ENCODE measurements at regions of chr19 and their contacts with region 1.

Region 1: GRCh38 chr19:13195678-13196077 is 45.5 kb downstream of the IER2 start:
- DNase-seq: peak; percentile 78
- H3K4me3 Mint-ChIP-seq: no peak overlapping the region
- H3K27ac Mint-ChIP-seq: peak overlapping the region; percentile 49
- H3K4me1 Mint-ChIP-seq: peaks cover 26% of the 10 kb centered on the region
- H3K27me3 Mint-ChIP-seq: no peaks in the 10 kb centered on the region

Region 2: GRCh38 chr19:13155472-13156359 is 40.0 kb before region 1 on chr19:
- CTCF ChIA-PET with region 1: interaction called, 19 read pairs
- POLR2A ChIA-PET with region 1: interaction called, 7 read pairs
- intact Hi-C with region 1: loop called (anchors 2 kb)
- DNase-seq: peak; percentile 84
- H3K4me3 Mint-ChIP-seq: peak overlapping the region; percentile 99
- H3K27ac Mint-ChIP-seq: peak overlapping the region; percentile 97
- H3K4me1 Mint-ChIP-seq: peaks cover 41% of the 10 kb centered on the region
- H3K27me3 Mint-ChIP-seq: peaks cover 3% of the 10 kb centered on the region

Region 3: DNA sequence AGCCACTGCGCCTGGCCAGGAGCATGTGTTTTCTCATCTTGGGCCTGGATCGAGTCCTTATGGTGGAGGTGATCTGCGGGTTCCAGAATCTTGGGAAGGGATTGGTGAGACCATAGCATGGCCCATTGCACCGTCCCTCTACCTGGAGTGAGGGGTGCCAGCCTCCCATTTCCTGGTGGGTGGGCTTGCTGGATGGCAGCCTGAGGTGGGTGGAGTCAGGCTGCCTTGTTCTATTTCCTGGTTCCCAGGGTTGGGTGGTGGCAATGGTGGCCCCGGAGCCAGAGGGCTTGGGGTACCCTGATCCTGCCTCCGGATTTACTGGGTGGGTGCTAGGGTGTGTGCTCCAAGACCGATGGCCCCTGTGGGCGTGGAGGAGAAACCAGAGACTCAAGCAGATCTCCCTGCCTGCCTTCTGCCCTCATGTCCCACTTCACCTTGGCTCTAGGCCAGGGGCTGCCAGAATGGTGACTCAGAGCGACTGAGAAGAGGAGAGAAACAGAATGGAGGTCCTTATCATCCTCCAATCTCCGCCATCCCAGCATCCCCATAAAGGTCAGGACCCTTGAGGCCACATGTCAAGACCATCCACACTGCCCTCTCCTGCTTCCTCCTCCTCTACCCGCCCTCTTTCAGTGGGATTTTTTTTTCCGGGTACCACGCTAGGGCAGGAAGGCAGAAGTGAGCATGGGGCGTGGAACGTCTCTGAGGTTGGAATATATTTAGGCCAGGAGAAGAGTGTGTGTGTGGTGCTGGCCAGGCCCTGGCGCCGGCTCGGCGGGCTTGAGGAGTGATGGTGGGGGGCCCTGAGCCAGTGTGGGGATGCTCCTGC is 23.4 kb before region 1 on chr19:
- CTCF ChIA-PET with region 1: interaction called, 13 read pairs
- POLR2A ChIA-PET with region 1: no interaction called
- intact Hi-C with region 1: no loop called
- DNase-seq: peak; percentile 90
- H3K4me3 Mint-ChIP-seq: peak overlapping the region; percentile 83
- H3K27ac Mint-ChIP-seq: peak overlapping the region; percentile 99
- H3K4me1 Mint-ChIP-seq: peaks cover 55% of the 10 kb centered on the region
- H3K27me3 Mint-ChIP-seq: no peaks in the 10 kb centered on the region

Region 4: GRCh38 chr19:13212759-13213330 is 17.2 kb after region 1 on chr19:
- CTCF ChIA-PET with region 1: interaction called, 22 read pairs
- POLR2A ChIA-PET with region 1: no interaction called
- intact Hi-C with region 1: loop called (anchors 2 kb)
- DNase-seq: peak; percentile 85
- H3K4me3 Mint-ChIP-seq: no peak overlapping the region
- H3K27ac Mint-ChIP-seq: peak overlapping the region; percentile 1
- H3K4me1 Mint-ChIP-seq: peaks cover 21% of the 10 kb centered on the region
- H3K27me3 Mint-ChIP-seq: no peaks in the 10 kb centered on the region

Region 5: GRCh38 chr19:13270514-13271105 is 74.9 kb after region 1 on chr19:
- CTCF ChIA-PET with region 1: interaction called, 17 read pairs
- POLR2A ChIA-PET with region 1: no interaction called
- intact Hi-C with region 1: no loop called
- DNase-seq: no peak
- H3K4me3 Mint-ChIP-seq: no peak overlapping the region
- H3K27ac Mint-ChIP-seq: no peak overlapping the region
- H3K4me1 Mint-ChIP-seq: peaks cover 6% of the 10 kb centered on the region
- H3K27me3 Mint-ChIP-seq: no peaks in the 10 kb centered on the region

Region 6: DNA sequence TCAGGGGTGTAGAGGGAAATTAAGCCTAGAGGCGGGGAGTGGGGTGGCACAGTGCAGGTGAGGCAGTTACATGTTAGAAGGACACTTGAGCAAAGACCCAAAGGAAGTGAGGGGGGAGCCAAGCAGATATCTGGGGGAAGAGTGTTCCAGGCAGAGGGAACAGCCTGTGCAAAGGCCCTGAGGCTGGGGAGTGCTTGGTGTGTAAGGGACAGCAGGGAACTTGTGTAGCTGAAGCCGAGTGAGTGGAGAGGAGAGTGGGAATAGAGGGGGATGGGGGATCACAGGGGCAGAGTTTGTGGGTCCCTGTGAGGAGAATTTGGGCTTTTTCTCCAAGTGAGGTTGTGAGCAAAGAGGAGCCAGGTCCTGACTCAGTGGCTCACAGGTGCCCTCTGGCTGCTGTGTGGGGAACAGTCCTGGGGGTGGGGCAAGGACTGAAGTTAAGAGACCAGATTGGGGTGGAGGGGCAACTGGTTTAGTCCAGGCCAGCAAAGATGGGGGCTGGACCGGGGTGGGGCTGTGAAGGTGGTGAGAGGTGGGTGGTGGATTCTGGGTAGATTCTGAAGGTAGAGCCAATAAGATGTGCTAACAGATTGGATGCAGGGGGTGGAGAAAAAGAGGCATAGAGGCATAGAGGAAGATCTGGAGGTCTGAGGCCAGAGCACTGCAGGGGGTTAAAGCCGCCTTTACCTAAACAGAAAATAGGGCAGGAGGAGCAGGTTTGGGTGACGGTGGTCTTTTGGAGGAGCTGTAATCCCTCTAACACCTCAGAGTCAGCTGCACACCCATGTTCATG is 235.3 kb after region 1 on chr19:
- CTCF ChIA-PET with region 1: interaction called, 3 read pairs
- POLR2A ChIA-PET with region 1: no interaction called
- intact Hi-C with region 1: loop called (anchors 5 kb)
- DNase-seq: peak; percentile 71
- H3K4me3 Mint-ChIP-seq: no peak overlapping the region
- H3K27ac Mint-ChIP-seq: no peak overlapping the region
- H3K4me1 Mint-ChIP-seq: no peaks in the 10 kb centered on the region
- H3K27me3 Mint-ChIP-seq: peaks cover 15% of the 10 kb centered on the region